ENCODE measurements at regions of chr6 and their contacts with region 1.

Region 1: DNA sequence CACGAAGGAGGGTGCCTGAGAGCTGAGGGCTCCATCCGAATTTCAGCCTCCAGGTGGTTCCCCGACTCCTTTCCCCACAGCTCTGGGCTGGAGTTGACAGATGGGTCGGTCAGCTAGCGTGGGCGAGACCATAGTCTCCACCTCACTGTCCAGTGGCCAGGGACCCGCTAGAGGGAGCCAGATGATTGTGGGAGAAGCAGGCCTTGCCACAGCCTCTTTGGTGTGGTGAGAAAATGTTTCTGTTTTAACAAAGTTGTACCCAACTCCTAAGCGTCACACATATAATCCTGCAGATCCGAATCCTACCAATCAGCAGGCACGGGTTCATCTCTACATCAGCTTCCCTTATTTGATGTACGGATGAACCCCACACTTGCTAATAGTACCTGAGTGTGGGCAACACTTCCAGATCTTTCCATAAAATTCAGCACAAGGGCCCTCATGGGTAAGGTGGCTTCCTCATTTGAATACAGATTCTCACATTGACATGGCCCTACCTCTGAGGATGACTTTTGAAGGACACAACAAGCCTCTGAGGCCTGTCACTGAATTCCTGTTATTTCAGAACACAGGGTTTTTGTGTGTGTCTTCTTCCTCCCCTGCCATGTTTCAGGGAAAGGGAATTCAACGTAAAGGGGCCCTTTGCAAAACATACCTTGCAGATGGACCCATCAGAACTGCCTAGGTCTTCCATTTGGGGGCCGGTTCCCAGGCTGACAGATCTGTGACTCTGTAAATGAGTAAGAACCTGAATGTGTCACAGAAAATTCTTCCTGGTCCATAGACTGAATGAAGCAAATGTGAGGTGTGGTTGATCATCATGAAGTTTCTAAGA is 103.2 kb upstream of the DUSP22 start:
- DNase-seq: peak; percentile 88 to 91
- H3K4me3 ChIP-seq: no peak overlapping the region
- H3K27ac ChIP-seq: no peak overlapping the region
- H3K4me1 ChIP-seq: peaks cover 0 to 3% of the 10 kb centered on the region in 2 donors
- H3K27me3 ChIP-seq: no peaks in the 10 kb centered on the region
- CTCF ChIP-seq: peak; percentile 63 to 94 (median 81)
- POLR2A ChIP-seq: no peak

Region 2: GRCh38 chr6:268394-268935 is 79.4 kb after region 1 on chr6:
- intact Hi-C with region 1: no loop called
- DNase-seq: no peak
- H3K4me3 ChIP-seq: no peak overlapping the region
- H3K27ac ChIP-seq: no peak overlapping the region
- H3K4me1 ChIP-seq: no peaks in the 10 kb centered on the region
- H3K27me3 ChIP-seq: no peaks in the 10 kb centered on the region
- CTCF ChIP-seq: no peak
- POLR2A ChIP-seq: no peak

Region 3: GRCh38 chr6:379367-380181 is 190.5 kb after region 1 on chr6:
- intact Hi-C with region 1: no loop called
- DNase-seq: no peak
- H3K4me3 ChIP-seq: no peak overlapping the region
- H3K27ac ChIP-seq: no peak overlapping the region
- H3K4me1 ChIP-seq: peaks cover 6 to 7% of the 10 kb centered on the region in 2 donors
- H3K27me3 ChIP-seq: peaks cover 5% of the 10 kb centered on the region
- CTCF ChIP-seq: no peak
- POLR2A ChIP-seq: no peak

Region 4: GRCh38 chr6:701700-702479 is 512.9 kb after region 1 on chr6:
- intact Hi-C with region 1: no loop called
- DNase-seq: no peak
- H3K4me3 ChIP-seq: no peak overlapping the region
- H3K27ac ChIP-seq: no peak overlapping the region
- H3K4me1 ChIP-seq: peaks cover 4 to 5% of the 10 kb centered on the region in 2 donors
- H3K27me3 ChIP-seq: no peaks in the 10 kb centered on the region
- CTCF ChIP-seq: no peak
- POLR2A ChIP-seq: no peak

Region 5: GRCh38 chr6:715709-716491 is 526.9 kb after region 1 on chr6:
- intact Hi-C with region 1: loop called (anchors 5 kb)
- DNase-seq: no peak
- H3K4me3 ChIP-seq: no peak overlapping the region
- H3K27ac ChIP-seq: no peak overlapping the region
- H3K4me1 ChIP-seq: no peaks in the 10 kb centered on the region
- H3K27me3 ChIP-seq: no peaks in the 10 kb centered on the region
- CTCF ChIP-seq: no peak
- POLR2A ChIP-seq: no peak

Measured in thyroid gland (tissue), 4 donors.